ENCODE measurements at regions of chr14 and their contacts with region 1.

Region 1: DNA sequence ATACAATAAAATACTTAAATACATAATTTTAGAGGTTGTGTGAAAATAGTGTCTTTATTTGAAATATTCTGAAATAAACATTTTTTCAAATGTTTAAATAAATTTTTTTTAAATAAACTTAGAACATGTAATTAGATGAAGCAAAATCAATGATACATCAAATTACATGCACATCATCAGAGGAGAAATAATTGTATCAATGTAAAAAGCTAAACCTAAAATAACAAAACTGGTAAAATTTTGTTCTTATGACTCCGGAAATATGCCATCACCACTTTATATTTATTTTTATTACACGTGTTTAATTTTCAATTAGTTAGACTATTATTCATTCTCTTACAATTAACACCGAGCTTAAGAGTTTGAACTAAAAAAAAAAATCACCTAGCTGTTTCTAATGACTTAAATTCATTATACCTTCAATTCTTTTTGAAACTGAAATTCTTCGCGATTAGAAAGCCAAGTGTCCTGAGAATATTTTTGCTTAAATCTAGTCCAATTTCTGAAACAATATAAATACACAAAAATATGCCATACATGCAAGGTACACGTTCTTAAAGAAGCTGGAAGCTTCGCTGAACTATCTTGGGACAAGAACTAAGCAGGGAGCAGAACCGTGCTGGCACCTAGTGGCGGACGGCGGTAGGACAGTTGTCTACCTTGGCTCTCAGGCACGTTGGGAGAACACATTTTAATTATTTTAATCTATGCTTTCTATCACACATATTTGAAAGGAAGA is 230.5 kb downstream of the SLC25A21 start:
- DNase-seq: peak; percentile 12 to 66 (median 51)
- H3K4me3 ChIP-seq: no peak overlapping the region
- H3K27ac ChIP-seq: no peak overlapping the region
- H3K4me1 ChIP-seq: no peaks in the 10 kb centered on the region
- H3K27me3 ChIP-seq: no peaks in the 10 kb centered on the region
- CTCF ChIP-seq: peak in 2 of 3 donors; percentile 54 to 67
- EP300 ChIP-seq: no peak
- POLR2A ChIP-seq: no peak

Region 2: DNA sequence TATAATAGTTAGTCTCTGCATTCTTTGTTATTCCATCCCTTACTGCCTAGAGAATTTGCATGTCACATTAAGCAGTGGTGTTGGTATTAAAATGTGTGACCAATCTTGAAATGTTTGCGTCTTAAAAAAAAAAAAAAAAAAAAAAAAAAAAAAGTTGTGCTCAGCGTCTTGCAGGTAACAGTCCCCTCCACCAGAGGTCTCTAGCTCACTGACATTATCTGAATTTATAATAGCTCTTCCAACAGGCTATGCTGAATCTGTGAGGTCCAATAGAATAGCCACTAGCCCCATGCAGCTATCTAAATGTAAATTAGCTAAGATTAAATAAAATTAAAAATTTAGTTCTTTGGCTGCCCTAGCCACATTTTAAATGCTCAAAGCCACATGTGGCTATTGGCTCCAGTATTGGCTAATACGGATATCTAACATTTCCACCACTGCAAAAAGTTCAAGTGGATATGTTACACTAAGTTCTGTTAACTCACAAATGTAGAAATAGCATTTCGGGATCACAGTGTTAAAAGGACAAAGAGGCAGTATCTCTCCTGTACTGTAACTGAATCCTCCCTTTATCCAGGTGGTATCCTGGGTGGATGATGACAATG is 388.2 kb before region 1 on chr14:
- intact Hi-C with region 1: loop called in 1 of 4 experiments (anchors 10 kb)
- DNase-seq: no peak
- H3K4me3 ChIP-seq: no peak overlapping the region
- H3K27ac ChIP-seq: no peak overlapping the region
- H3K4me1 ChIP-seq: no peaks in the 10 kb centered on the region
- H3K27me3 ChIP-seq: no peaks in the 10 kb centered on the region
- CTCF ChIP-seq: no peak
- EP300 ChIP-seq: no peak
- POLR2A ChIP-seq: no peak

Region 3: DNA sequence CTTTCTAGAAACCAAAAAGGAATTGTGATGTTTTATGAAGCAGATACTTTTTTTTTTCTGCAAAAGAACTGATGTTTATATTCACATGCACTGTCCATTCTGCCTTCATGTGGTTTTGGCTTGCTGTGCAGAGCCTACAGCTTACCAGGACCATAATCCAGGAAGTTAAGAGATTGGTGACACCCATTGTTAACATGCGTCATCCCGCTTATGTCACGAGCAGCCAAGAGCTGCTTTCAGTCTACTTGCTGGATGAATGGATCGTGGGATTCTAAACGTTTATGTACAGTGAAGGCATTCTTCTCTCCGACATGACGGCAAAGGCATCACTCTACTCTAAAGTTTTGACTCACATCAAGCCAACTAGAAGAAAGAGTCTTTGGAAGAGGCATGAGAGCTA is 203.7 kb before region 1 on chr14:
- intact Hi-C with region 1: no loop called
- DNase-seq: no peak
- H3K4me3 ChIP-seq: no peak overlapping the region
- H3K27ac ChIP-seq: no peak overlapping the region
- H3K4me1 ChIP-seq: no peaks in the 10 kb centered on the region
- H3K27me3 ChIP-seq: no peaks in the 10 kb centered on the region
- CTCF ChIP-seq: no peak
- EP300 ChIP-seq: no peak
- POLR2A ChIP-seq: no peak

Region 4: GRCh38 chr14:36866867-36867266 is 75.1 kb before region 1 on chr14:
- intact Hi-C with region 1: no loop called
- DNase-seq: no peak
- H3K4me3 ChIP-seq: no peak overlapping the region
- H3K27ac ChIP-seq: no peak overlapping the region
- H3K4me1 ChIP-seq: no peaks in the 10 kb centered on the region
- H3K27me3 ChIP-seq: no peaks in the 10 kb centered on the region
- CTCF ChIP-seq: no peak
- EP300 ChIP-seq: no peak
- POLR2A ChIP-seq: no peak

Region 5: DNA sequence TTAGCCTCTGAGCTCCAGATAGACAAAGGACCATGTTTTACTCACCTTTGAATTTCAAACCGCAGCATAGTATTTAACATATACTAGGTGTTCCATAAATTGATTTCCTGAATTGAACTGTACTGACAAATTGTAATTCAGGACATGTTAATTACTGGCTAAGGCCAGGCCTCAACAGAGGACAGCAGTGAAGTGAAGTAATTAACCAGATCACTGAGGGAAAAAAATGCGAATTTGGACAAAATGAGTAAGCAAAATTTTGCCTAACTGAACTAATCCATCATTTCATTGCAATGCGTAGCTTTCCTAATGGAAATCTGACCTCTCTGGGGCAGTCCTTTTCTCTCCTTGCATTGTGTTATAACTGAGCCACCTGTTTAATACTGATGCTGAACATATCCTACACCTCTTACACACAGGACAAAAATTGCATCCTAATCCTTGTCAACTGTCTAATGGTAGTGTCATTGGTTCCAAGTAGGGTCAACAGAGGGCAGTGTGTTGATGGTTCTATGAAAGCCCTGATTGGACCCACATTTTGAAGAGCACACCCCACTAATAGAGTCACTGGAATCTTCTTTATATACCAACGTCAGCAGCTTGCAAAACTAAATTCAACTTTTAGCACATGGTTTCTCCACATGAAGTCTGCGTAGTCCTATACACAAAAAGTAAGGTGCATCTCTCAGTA is 82.1 kb after region 1 on chr14:
- intact Hi-C with region 1: no loop called
- DNase-seq: no peak
- H3K4me3 ChIP-seq: no peak overlapping the region
- H3K27ac ChIP-seq: no peak overlapping the region
- H3K4me1 ChIP-seq: no peaks in the 10 kb centered on the region
- H3K27me3 ChIP-seq: no peaks in the 10 kb centered on the region
- CTCF ChIP-seq: no peak
- EP300 ChIP-seq: no peak
- POLR2A ChIP-seq: no peak

Region 6: DNA sequence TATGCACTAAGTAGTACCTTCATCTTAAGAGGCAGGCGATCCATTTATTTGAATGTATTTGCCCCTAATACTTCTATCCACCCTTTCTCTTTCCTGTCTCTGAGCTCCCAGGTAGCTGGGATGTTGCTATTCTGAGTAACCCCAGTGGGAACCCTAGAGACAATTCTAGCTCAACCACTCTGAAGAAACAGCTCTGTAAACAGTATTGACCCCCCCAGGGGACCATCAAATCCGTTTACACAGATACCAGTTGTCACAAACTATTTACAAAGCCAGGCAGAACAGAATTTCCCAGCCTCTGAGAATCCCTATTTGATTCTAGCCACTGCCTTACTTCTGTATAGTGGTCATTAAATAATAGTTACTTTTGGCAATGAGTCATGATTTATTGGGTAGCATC is 320.7 kb after region 1 on chr14:
- intact Hi-C with region 1: no loop called
- DNase-seq: no peak
- H3K4me3 ChIP-seq: no peak overlapping the region
- H3K27ac ChIP-seq: no peak overlapping the region
- H3K4me1 ChIP-seq: no peaks in the 10 kb centered on the region
- H3K27me3 ChIP-seq: no peaks in the 10 kb centered on the region
- CTCF ChIP-seq: no peak
- EP300 ChIP-seq: no peak
- POLR2A ChIP-seq: no peak

Measured in ovary (tissue), 10 donors.